Heart right ventricle (tissue), 16 donors: ENCODE measurements at regions of chr16 and their contacts with region 1.

Region 1: GRCh38 chr16:52184336-52184735 is 362.6 kb downstream of the TOX3 start:
- DNase-seq: no peak
- ATAC-seq: no peak
- H3K4me3 ChIP-seq: no peak overlapping the region
- H3K27ac ChIP-seq: no peak overlapping the region
- H3K4me1 ChIP-seq: no peaks in the 10 kb centered on the region
- H3K27me3 ChIP-seq: no peaks in the 10 kb centered on the region
- CTCF ChIP-seq: no peak

Region 2: GRCh38 chr16:53022374-53022773 is 838.0 kb after region 1 on chr16:
- intact Hi-C with region 1: loop called in 3 of 10 experiments (anchors 5 to 10 kb)
- DNase-seq: peak in 1 of 2 donors; percentile 40
- ATAC-seq: peak in 6 of 8 donors; percentile 55 to 77 (median 60)
- H3K4me3 ChIP-seq: no peak overlapping the region
- H3K27ac ChIP-seq: no peak overlapping the region
- H3K4me1 ChIP-seq: no peaks in the 10 kb centered on the region
- H3K27me3 ChIP-seq: no peaks in the 10 kb centered on the region
- CTCF ChIP-seq: peak; percentile 26 to 69 (median 58)